H1 (cell line): ENCODE measurements at regions of chr9 and their contacts with region 1.

Region 1: GRCh38 chr9:121658166-121658565 is 6.7 kb downstream of the DAB2IP start:
- DNase-seq: no peak
- H3K4me3 ChIP-seq: no peak overlapping the region
- H3K27ac ChIP-seq: no peak overlapping the region
- H3K4me1 ChIP-seq: peaks cover 0 to 15% (median 7%) of the 10 kb centered on the region in 4 experiments; a peak in 6 of 7 replicates
- H3K27me3 ChIP-seq: no peaks in the 10 kb centered on the region
- CTCF ChIP-seq: no peak
- EP300 ChIP-seq: no peak
- POLR2A ChIP-seq: no peak
- RAD21 ChIP-seq: no peak

Region 2: DNA sequence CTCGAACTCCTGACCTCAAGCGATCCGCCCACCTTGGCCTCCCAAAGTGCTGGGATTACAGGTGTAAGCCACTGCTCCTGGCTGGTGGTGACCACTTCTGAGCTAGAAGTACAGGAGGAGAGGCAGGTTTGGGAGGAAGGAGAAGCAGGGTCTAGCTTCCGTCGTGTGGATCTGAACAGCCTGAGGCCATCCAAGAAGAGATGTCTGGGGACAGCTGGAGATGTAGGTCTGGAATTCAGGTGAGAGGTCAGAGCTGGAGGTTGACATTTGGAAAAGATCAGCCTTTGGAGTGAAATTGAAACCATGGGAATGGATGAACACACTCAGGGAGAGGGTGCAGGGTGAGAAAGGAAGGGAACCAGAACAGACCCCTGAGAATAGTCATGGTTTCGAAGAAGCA is 125.3 kb before region 1 on chr9:
- CTCF ChIA-PET with region 1: no interaction called
- POLR2A ChIA-PET with region 1: no interaction called
- DNase-seq: no peak
- H3K4me3 ChIP-seq: no peak overlapping the region
- H3K27ac ChIP-seq: no peak overlapping the region
- H3K4me1 ChIP-seq: no peaks in the 10 kb centered on the region
- H3K27me3 ChIP-seq: no peaks in the 10 kb centered on the region
- CTCF ChIP-seq: no peak
- EP300 ChIP-seq: no peak
- POLR2A ChIP-seq: no peak
- RAD21 ChIP-seq: no peak

Region 3: GRCh38 chr9:121640076-121640475 is 18.1 kb before region 1 on chr9:
- CTCF ChIA-PET with region 1: interaction called, 18 read pairs
- POLR2A ChIA-PET with region 1: no interaction called
- DNase-seq: peak in 1 of 2 experiments; percentile 86
- H3K4me3 ChIP-seq: no peak overlapping the region
- H3K27ac ChIP-seq: no peak overlapping the region
- H3K4me1 ChIP-seq: peaks cover 0 to 21% (median 12%) of the 10 kb centered on the region in 4 experiments; a peak in 5 of 7 replicates
- H3K27me3 ChIP-seq: no peaks in the 10 kb centered on the region
- CTCF ChIP-seq: peak; percentile 58 to 69 (median 62)
- EP300 ChIP-seq: no peak
- POLR2A ChIP-seq: no peak
- RAD21 ChIP-seq: peak; percentile 73 to 80

Region 4: GRCh38 chr9:121675969-121676822 is 18.0 kb after region 1 on chr9:
- CTCF ChIA-PET with region 1: interaction called, 10 read pairs
- POLR2A ChIA-PET with region 1: interaction called, 3 read pairs
- DNase-seq: no peak
- H3K4me3 ChIP-seq: no peak overlapping the region
- H3K27ac ChIP-seq: no peak overlapping the region
- H3K4me1 ChIP-seq: peaks cover 3 to 11% (median 8%) of the 10 kb centered on the region in 4 experiments
- H3K27me3 ChIP-seq: no peaks in the 10 kb centered on the region
- CTCF ChIP-seq: no peak
- EP300 ChIP-seq: no peak
- POLR2A ChIP-seq: no peak
- RAD21 ChIP-seq: no peak

Region 5: GRCh38 chr9:121698627-121699570 is 40.7 kb after region 1 on chr9:
- CTCF ChIA-PET with region 1: interaction called, 28 read pairs
- POLR2A ChIA-PET with region 1: no interaction called
- DNase-seq: peak in 1 of 2 experiments; percentile 86
- H3K4me3 ChIP-seq: peak overlapping the region; percentile 54 to 68 (median 61)
- H3K27ac ChIP-seq: no peak overlapping the region
- H3K4me1 ChIP-seq: peaks cover 4 to 13% (median 12%) of the 10 kb centered on the region in 4 experiments
- H3K27me3 ChIP-seq: peaks cover 0 to 5% (median 0%) of the 10 kb centered on the region in 4 experiments; a peak in 4 of 7 replicates
- CTCF ChIP-seq: no peak
- EP300 ChIP-seq: no peak
- POLR2A ChIP-seq: no peak
- RAD21 ChIP-seq: no peak